Activated CD4-positive, alpha-beta T cell treated with anti-CD3 and anti-CD28 coated beads, Interleukin-2, amount 10 ng/mL, durations not matched to agents 24 days and 14 days (primary cell): ENCODE measurements at regions of chr12 and their contacts with region 1.

Region 1: GRCh38 chr12:106753526-106753925 is 21.0 kb upstream of the RIC8B start:
- DNase-seq: peak; percentile 80
- H3K4me3 Mint-ChIP-seq: peak overlapping the region; percentile 17
- H3K27ac Mint-ChIP-seq: peak overlapping the region; percentile 73
- H3K4me1 Mint-ChIP-seq: peaks cover 12% of the 10 kb centered on the region
- H3K27me3 Mint-ChIP-seq: no peaks in the 10 kb centered on the region

Region 2: DNA sequence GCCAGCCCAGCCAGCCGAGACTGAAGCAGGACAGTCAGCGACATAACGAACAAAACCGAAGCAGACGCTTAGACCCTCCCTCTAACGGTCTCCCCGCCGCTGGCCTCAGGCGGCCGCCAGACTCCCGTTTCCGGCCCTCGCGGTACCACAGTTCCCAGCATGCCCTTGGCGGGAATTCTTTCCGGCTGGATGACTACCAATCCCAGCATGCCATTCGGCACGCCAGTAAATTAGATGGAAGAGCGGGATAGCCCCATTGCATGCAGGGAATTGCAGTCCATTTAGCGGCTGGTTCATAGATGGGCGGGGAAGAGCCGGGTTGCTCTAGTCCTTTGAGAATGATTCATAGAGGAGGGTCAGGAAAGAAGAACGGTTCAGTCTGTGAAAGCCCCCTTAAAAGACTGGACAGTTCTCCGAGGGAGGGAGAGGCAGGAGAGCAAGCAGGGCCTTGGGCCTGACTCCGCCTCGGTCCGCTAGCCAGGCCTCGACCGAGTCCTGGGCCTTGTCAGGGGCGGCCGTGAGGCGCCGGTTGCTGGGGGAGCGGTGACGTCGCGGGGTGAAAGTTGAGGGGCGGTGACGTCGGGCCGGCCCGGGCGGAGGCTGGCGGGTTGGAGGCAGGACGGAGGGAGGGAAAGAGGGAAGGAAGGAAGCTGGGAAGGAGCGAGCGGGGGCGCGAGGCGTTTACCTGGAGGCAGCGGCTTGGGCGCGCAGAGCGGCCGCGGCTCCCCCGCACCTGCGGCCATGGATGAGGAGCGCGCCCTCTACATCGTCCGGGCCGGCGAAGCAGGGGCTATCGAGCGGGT is 20.7 kb after region 1 on chr12 and contains the start of gene RIC8B:
- intact Hi-C with region 1: loop called (anchors 2 kb)
- DNase-seq: peak; percentile 95
- H3K4me3 Mint-ChIP-seq: peak within 1 kb of the TSS; percentile 98
- H3K27ac Mint-ChIP-seq: peak within 1 kb of the TSS; percentile 96
- H3K4me1 Mint-ChIP-seq: peaks cover 32% of the 10 kb centered on the region
- H3K27me3 Mint-ChIP-seq: peaks cover 2% of the 10 kb centered on the region
- total RNA-seq, gene RIC8B: 13.6 and 14.9 TPM in 2 replicates